ENCODE measurements at regions of chr5 and their contacts with region 1.

Region 1: GRCh38 chr5:147223948-147224791 is 10.7 kb upstream of the STK32A start:
- DNase-seq: peak; percentile 21
- H3K4me3 ChIP-seq: no peak overlapping the region
- H3K27ac ChIP-seq: no peak overlapping the region
- H3K4me1 ChIP-seq: no peaks in the 10 kb centered on the region
- H3K27me3 ChIP-seq: peaks cover 2% of the 10 kb centered on the region
- CTCF ChIP-seq: peak; percentile 50 to 73

Region 2: GRCh38 chr5:147188200-147189108 is 35.7 kb before region 1 on chr5:
- CTCF ChIA-PET with region 1: no interaction called
- dilution Hi-C with region 1: no loop called
- in situ Hi-C with region 1: no loop called
- intact Hi-C with region 1: no loop called
- DNase-seq: peak; percentile 33
- H3K4me3 ChIP-seq: no peak overlapping the region
- H3K27ac ChIP-seq: no peak overlapping the region
- H3K4me1 ChIP-seq: no peaks in the 10 kb centered on the region
- H3K27me3 ChIP-seq: no peaks in the 10 kb centered on the region
- CTCF ChIP-seq: peak; percentile 73 to 76

Region 3: DNA sequence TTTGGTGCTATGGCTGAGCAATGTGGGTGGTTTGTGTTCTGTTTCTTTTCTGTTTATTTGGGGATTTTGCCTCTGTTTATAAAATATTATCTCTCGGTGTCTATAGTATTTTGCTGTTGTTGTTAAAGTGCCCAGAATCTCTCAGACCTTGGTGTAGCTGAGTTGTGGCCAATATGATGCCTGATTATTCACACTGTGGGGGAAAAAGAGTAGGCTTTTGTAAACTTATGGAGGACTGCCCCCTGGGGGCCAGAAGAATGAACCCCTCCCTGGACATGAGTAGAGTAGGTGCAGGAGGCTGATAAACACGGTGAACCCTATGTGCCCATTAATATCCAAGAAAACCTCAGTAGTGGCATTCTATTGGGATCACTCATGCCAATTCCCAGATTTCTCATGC is 334.7 kb after region 1 on chr5:
- CTCF ChIA-PET with region 1: no interaction called
- dilution Hi-C with region 1: no loop called
- in situ Hi-C with region 1: loop called in 1 of 2 experiments (anchors 25 kb)
- intact Hi-C with region 1: loop called (anchors 1 kb)
- DNase-seq: peak; percentile 57
- H3K4me3 ChIP-seq: no peak overlapping the region
- H3K27ac ChIP-seq: no peak overlapping the region
- H3K4me1 ChIP-seq: peaks cover 4% of the 10 kb centered on the region
- H3K27me3 ChIP-seq: no peaks in the 10 kb centered on the region
- CTCF ChIP-seq: peak; percentile 61 to 71

Region 4: DNA sequence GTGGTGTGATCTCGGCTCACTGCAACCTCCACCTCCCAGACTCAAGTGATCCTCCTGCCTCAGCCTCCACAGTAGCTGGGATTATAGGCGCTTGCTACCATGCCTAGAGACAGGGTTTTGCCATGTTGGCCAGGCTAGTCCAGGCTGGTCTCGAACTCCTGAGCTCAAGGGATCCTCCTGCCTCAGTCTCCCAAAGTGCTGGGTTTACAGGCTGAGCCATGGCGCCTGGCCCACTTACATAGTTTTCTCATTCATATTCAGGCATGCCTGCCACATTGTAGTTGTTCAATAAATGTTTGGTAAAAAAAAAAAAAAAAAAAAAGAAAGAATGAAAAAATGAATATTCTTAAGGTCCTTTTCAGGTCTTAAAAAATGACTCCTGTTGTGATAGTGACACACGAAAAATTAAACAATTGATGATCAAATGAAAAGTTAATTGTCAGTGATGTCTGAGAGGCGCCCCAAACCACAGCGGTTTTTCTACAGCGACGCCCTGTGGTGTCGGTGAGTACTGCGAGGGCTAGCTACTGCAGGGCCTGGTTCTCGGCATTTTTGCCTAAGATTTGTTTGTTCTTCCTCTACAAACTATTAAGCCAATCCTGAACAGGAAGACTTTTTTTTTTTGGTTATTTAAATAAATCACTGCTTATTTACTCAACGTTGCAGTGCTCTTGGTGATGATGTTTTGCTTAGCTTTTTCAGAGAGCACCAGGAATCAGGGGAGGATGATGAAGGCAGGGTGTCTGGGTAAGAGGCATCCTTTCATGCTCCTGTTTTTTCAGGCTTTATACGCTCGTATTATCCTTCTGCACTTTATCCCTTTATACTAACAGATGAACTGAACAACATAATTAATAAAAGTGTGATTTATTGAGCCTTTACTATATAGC is 352.7 kb after region 1 on chr5:
- CTCF ChIA-PET with region 1: no interaction called
- dilution Hi-C with region 1: no loop called
- in situ Hi-C with region 1: loop called in 1 of 2 experiments (anchors 25 kb)
- intact Hi-C with region 1: loop called (anchors 1 kb)
- DNase-seq: peak; percentile 32
- H3K4me3 ChIP-seq: no peak overlapping the region
- H3K27ac ChIP-seq: no peak overlapping the region
- H3K4me1 ChIP-seq: peaks cover 3% of the 10 kb centered on the region
- H3K27me3 ChIP-seq: peaks cover 2% of the 10 kb centered on the region
- CTCF ChIP-seq: peak; percentile 89 to 97